A549 (cell line): ENCODE measurements at regions of chr19 and their contacts with region 1.

Region 1: GRCh38 chr19:49224856-49225255 is 67.3 kb downstream of the TRPM4 start:
- DNase-seq: peak; percentile 84 to 90
- ATAC-seq: peak; percentile 79 to 89
- H3K4me3 ChIP-seq: no peak overlapping the region
- H3K27ac ChIP-seq: peak overlapping the region in 1 of 2 experiments; percentile 23; a peak in 1 of 6 replicates
- H3K4me1 ChIP-seq: no peaks in the 10 kb centered on the region
- CTCF ChIP-seq: peak; percentile 67
- EP300 ChIP-seq: no peak
- POLR2A ChIP-seq: no peak
- RAD21 ChIP-seq: peak; percentile 78 to 94

Region 2: GRCh38 chr19:49148784-49149651 is 75.8 kb before region 1 on chr19:
- CTCF ChIA-PET with region 1: interaction called, 10 read pairs
- POLR2A ChIA-PET with region 1: no interaction called
- DNase-seq: peak; percentile 96 to 98
- ATAC-seq: peak; percentile 32 to 71
- H3K4me3 ChIP-seq: peak overlapping the region; percentile 68
- H3K27ac ChIP-seq: peak overlapping the region; percentile 76 to 83
- H3K4me1 ChIP-seq: peaks cover 31% of the 10 kb centered on the region
- CTCF ChIP-seq: no peak
- EP300 ChIP-seq: no peak
- POLR2A ChIP-seq: peak; percentile 33; the same call in 1 of the 2 replicates
- RAD21 ChIP-seq: no peak

Region 3: DNA sequence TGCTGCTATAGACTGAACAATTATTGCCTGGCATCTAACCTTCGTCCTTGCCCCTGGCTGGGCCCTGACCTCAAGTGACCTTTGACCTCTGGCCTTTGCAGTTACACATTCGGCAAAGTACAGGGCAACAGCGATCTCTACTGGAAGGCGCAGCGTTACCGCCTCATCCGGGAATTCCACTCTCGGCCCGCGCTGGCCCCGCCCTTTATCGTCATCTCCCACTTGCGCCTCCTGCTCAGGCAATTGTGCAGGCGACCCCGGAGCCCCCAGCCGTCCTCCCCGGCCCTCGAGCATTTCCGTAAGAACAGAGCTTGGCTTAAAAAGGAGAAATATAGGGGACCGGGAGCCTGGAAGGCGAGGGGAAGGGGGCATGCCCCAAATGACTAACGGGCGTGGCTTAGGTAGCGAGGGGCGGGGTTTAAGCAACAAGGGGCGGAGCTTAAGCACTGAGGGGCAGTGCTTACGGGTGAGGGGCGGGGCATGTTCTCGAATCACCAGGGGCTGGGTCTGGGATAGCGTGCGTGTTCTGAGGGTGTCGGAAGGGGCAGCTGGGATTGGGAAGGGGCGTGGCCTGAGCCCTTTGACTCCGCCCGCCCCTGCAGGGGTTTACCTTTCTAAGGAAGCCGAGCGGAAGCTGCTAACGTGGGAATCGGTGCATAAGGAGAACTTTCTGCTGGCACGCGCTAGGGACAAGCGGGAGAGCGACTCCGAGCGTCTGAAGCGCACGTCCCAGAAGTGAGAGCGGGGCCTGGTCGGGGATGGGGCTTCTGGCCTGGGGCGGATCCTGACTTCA is 14.6 kb before region 1 on chr19:
- CTCF ChIA-PET with region 1: interaction called, 93 read pairs
- POLR2A ChIA-PET with region 1: no interaction called
- DNase-seq: peak in 1 of 2 experiments; percentile 69
- ATAC-seq: peak; percentile 27 to 57; a peak in 3 of 6 replicates
- H3K4me3 ChIP-seq: no peak overlapping the region
- H3K27ac ChIP-seq: no peak overlapping the region
- H3K4me1 ChIP-seq: 0 out of 3 replicates have a peak, but pooled peaks cover 3% of the 10 kb centered on the region
- CTCF ChIP-seq: no peak
- EP300 ChIP-seq: no peak
- POLR2A ChIP-seq: no peak
- RAD21 ChIP-seq: no peak

Region 4: GRCh38 chr19:49282184-49282583 is 57.3 kb after region 1 on chr19:
- CTCF ChIA-PET with region 1: interaction called, 28 read pairs
- POLR2A ChIA-PET with region 1: no interaction called
- DNase-seq: no peak
- ATAC-seq: no peak
- H3K4me3 ChIP-seq: no peak overlapping the region
- H3K27ac ChIP-seq: no peak overlapping the region
- H3K4me1 ChIP-seq: no peaks in the 10 kb centered on the region
- CTCF ChIP-seq: no peak
- EP300 ChIP-seq: no peak
- POLR2A ChIP-seq: no peak
- RAD21 ChIP-seq: no peak

Region 5: DNA sequence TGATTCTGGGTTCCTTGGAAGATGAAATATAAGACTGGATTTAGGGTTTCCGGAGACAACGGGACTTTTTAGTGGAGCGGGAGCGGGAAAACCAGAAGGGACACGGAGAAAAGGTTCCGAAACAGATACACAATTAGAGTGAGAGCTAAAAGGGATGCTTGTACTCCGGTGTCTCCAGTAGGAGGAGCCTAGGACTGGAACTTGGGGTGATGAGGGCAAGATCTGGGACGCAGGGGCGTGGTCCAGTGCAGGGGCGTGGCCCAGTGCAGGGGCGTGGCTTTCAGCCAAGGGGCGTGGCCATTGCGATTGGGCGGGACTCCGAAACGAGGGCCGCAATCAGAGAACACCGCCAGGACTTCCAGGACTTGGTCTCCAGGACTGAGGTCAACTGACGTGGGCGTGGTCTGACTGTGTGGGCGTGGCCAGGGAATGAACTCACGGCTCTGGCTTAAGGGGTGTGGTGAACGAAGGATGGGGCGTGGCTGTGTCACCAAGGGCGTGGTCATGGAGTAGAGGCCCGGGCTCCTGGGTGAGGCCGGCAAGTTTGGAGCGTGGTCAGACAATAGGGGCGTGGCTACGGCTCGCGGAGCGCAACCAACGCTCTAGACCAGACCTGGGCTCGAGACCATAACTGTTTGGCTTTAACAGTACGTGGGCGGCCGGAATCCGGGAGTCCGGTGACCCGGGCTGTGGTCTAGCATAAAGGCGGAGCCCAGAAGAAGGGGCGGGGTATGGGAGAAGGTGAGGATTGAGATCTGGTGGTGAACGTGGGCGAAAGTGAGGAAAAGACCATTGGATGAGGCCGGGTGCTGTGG is 138.6 kb after region 1 on chr19 and contains the start of gene DKKL1:
- CTCF ChIA-PET with region 1: interaction called, 19 read pairs
- POLR2A ChIA-PET with region 1: no interaction called
- DNase-seq: peak; percentile 98 to 100
- ATAC-seq: peak; percentile 78 to 90
- H3K4me3 ChIP-seq: peak within 1 kb of the TSS; percentile 88
- H3K27ac ChIP-seq: peak within 1 kb of the TSS; percentile 87 to 90
- H3K4me1 ChIP-seq: peaks cover 15% of the 10 kb centered on the region; the same call in 2 of the 3 replicates
- CTCF ChIP-seq: peak; percentile 18; the same call in 1 of the 3 replicates
- EP300 ChIP-seq: no peak
- POLR2A ChIP-seq: peak; percentile 30; the same call in 1 of the 2 replicates
- RAD21 ChIP-seq: 0 out of 5 replicates have a peak, but pooled peaks of 1 of the 2 experiments have one; percentile 23
- polyA plus RNA-seq, gene DKKL1: 0.53 and 0.91 TPM in 2 replicates

Region 6: GRCh38 chr19:49443366-49444099 is 218.7 kb after region 1 on chr19:
- CTCF ChIA-PET with region 1: interaction called, 38 read pairs
- POLR2A ChIA-PET with region 1: no interaction called
- DNase-seq: peak; percentile 94 to 97
- ATAC-seq: peak; percentile 72 to 85
- H3K4me3 ChIP-seq: peak overlapping the region; percentile 79
- H3K27ac ChIP-seq: peak overlapping the region; percentile 85 to 89
- H3K4me1 ChIP-seq: peaks cover 19% of the 10 kb centered on the region
- CTCF ChIP-seq: peak; percentile 97
- EP300 ChIP-seq: no peak
- POLR2A ChIP-seq: peak; percentile 21; the same call in 1 of the 2 replicates
- RAD21 ChIP-seq: peak; percentile 64 to 82